PC-3 (cell line): ENCODE measurements at regions of chr19 and their contacts with region 1.

Region 1: GRCh38 chr19:6372594-6373095 is at the start of gene ALKBH7:
- DNase-seq: peak; percentile 100
- ATAC-seq: peak; percentile 87
- H3K4me3 ChIP-seq: peak within 1 kb of the TSS; percentile 79
- H3K27ac ChIP-seq: peak within 1 kb of the TSS; percentile 64
- H3K4me1 ChIP-seq: peaks cover 9% of the 10 kb centered on the region
- H3K27me3 ChIP-seq: no peaks in the 10 kb centered on the region
- CTCF ChIP-seq: no peak
- total RNA-seq, gene ALKBH7: 68.4 and 81.1 TPM in 2 replicates

Region 2: GRCh38 chr19:5600797-5601196 is 771.8 kb before region 1 on chr19:
- CTCF ChIA-PET with region 1: no interaction called
- POLR2A ChIA-PET with region 1: no interaction called
- intact Hi-C with region 1: no loop called
- DNase-seq: no peak
- ATAC-seq: no peak
- H3K4me3 ChIP-seq: no peak overlapping the region
- H3K27ac ChIP-seq: no peak overlapping the region
- H3K4me1 ChIP-seq: no peaks in the 10 kb centered on the region
- H3K27me3 ChIP-seq: no peaks in the 10 kb centered on the region
- CTCF ChIP-seq: no peak

Region 3: GRCh38 chr19:6393074-6393983 is 20.7 kb after region 1 on chr19 and contains the start of gene GTF2F1:
- CTCF ChIA-PET with region 1: no interaction called
- POLR2A ChIA-PET with region 1: no interaction called
- intact Hi-C with region 1: loop called (anchors 1 kb)
- DNase-seq: peak; percentile 93
- ATAC-seq: peak; percentile 93
- H3K4me3 ChIP-seq: peak within 1 kb of the TSS; percentile 81
- H3K27ac ChIP-seq: peak within 1 kb of the TSS; percentile 53
- H3K4me1 ChIP-seq: peaks cover 18% of the 10 kb centered on the region
- H3K27me3 ChIP-seq: no peaks in the 10 kb centered on the region
- CTCF ChIP-seq: peak; percentile 25; the same call in 1 of the 2 replicates
- total RNA-seq, gene GTF2F1: 89.4 and 114 TPM in 2 replicates

Region 4: GRCh38 chr19:6424939-6425731 is 52.5 kb after region 1 on chr19:
- CTCF ChIA-PET with region 1: no interaction called
- POLR2A ChIA-PET with region 1: interaction called, 8 read pairs
- intact Hi-C with region 1: loop called (anchors 1 kb)
- DNase-seq: peak; percentile 100
- ATAC-seq: peak; percentile 92
- H3K4me3 ChIP-seq: no peak overlapping the region
- H3K27ac ChIP-seq: no peak overlapping the region
- H3K4me1 ChIP-seq: peaks cover 17% of the 10 kb centered on the region; the same call in 1 of the 2 replicates
- H3K27me3 ChIP-seq: no peaks in the 10 kb centered on the region
- CTCF ChIP-seq: no peak

Region 5: DNA sequence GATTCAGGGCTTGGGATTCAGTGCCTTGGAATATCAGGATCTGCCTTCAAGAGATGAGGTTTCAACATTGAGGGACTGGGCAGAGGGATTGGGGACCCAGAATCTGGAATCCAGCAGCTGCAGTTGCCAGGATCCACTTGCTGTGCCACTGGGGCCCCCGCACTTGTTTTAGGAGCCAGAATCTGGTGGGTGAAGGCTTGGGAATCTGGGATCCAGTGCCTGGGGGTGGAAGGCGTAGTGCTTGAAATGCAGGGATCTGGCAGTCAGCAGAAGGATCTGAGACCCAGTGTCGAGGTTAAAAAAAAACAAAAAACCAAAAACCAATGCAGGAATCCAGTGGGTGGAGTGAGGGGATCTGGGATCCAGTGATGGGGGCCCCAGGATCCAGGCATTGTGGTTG is 68.3 kb after region 1 on chr19:
- CTCF ChIA-PET with region 1: no interaction called
- POLR2A ChIA-PET with region 1: no interaction called
- intact Hi-C with region 1: no loop called
- DNase-seq: no peak
- ATAC-seq: no peak
- H3K4me3 ChIP-seq: no peak overlapping the region
- H3K27ac ChIP-seq: no peak overlapping the region
- H3K4me1 ChIP-seq: no peaks in the 10 kb centered on the region
- H3K27me3 ChIP-seq: no peaks in the 10 kb centered on the region
- CTCF ChIP-seq: no peak

Region 6: GRCh38 chr19:6452899-6453298 is 80.3 kb after region 1 on chr19:
- CTCF ChIA-PET with region 1: no interaction called
- POLR2A ChIA-PET with region 1: interaction called, 10 read pairs
- intact Hi-C with region 1: no loop called
- DNase-seq: no peak
- ATAC-seq: no peak
- H3K4me3 ChIP-seq: no peak overlapping the region
- H3K27ac ChIP-seq: no peak overlapping the region
- H3K4me1 ChIP-seq: no peaks in the 10 kb centered on the region
- H3K27me3 ChIP-seq: no peaks in the 10 kb centered on the region
- CTCF ChIP-seq: no peak

Region 7: GRCh38 chr19:6460101-6460853 is 87.6 kb after region 1 on chr19:
- CTCF ChIA-PET with region 1: no interaction called
- POLR2A ChIA-PET with region 1: no interaction called
- intact Hi-C with region 1: loop called (anchors 2 kb)
- DNase-seq: peak; percentile 99
- ATAC-seq: peak; percentile 73
- H3K4me3 ChIP-seq: peak overlapping the region; percentile 68
- H3K27ac ChIP-seq: peak overlapping the region; percentile 8; the same call in 1 of the 2 replicates
- H3K4me1 ChIP-seq: peaks cover 14% of the 10 kb centered on the region
- H3K27me3 ChIP-seq: no peaks in the 10 kb centered on the region
- CTCF ChIP-seq: peak; percentile 71

Region 8: DNA sequence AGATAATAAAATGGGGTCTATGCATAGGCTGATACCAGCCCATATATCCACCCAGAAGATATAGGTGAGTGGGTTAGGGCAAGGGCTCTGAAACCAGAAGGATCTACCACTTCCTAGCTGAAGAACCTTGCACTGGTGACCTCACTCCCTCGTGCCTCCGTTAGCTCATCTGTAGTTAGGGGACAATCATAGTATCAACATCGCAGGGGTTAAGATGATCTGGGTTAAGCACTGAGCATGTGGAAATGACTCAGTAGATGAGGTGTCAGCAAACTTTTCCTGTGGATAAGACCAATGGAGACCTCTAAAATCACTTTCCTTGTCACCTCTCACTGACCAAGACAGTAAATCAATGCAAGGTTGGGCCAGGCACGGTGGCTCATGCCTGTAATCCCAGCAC is 266.8 kb after region 1 on chr19:
- CTCF ChIA-PET with region 1: no interaction called
- POLR2A ChIA-PET with region 1: no interaction called
- intact Hi-C with region 1: no loop called
- DNase-seq: peak; percentile 63
- ATAC-seq: peak; percentile 66
- H3K4me3 ChIP-seq: no peak overlapping the region
- H3K27ac ChIP-seq: no peak overlapping the region
- H3K4me1 ChIP-seq: peaks cover 5% of the 10 kb centered on the region; the same call in 1 of the 2 replicates
- H3K27me3 ChIP-seq: no peaks in the 10 kb centered on the region
- CTCF ChIP-seq: no peak